ENCODE measurements at regions of chr9 and their contacts with region 1.

Region 1: DNA sequence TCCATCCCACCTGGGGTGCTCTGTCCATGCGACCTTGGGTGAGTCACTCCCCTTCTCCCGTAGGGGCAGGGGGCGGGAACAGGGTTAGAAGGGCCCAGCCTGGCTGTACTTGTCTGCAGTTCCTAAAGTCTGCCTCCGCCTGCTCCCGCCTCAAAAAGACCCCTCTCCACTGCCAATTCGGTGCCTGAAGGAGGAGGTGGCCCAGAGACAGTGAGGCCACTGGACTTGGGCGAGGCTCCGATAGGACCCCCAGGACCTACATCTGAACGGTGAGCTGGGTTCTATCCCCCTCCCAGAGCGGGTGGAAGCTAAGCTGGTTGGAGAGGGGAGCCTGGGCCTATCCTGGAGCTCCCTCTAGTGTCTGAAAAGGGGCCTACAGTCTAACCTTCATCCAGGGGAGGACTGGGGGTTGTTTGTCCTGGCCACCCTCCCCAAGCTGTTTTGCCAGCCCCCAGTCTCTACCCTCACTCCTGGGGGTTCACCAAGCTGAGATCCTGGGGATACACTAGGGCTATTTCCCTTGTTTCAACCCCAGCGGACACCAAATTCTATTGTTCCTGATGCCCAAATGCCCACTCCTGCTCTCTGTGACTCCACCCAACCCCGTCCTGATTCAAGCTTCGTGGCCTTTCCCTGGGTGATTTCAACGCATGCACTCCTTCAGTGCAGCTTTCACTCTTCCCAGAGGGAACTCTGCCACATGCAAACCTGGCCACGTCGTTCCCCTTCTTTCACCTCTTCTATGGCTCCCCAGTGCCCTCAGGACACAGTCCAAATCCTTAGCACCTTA is 6.1 kb upstream of the CRB2 start:
- DNase-seq: peak; percentile 43
- ATAC-seq: peak; percentile 88
- H3K4me3 ChIP-seq: no peak overlapping the region
- H3K27ac ChIP-seq: no peak overlapping the region
- H3K4me1 ChIP-seq: peaks cover 2% of the 10 kb centered on the region; the same call in 1 of the 2 replicates
- H3K27me3 ChIP-seq: peaks cover 42% of the 10 kb centered on the region
- CTCF ChIP-seq: peak; percentile 93
- POLR2A ChIP-seq: no peak
- RAD21 ChIP-seq: peak; percentile 98

Region 2: DNA sequence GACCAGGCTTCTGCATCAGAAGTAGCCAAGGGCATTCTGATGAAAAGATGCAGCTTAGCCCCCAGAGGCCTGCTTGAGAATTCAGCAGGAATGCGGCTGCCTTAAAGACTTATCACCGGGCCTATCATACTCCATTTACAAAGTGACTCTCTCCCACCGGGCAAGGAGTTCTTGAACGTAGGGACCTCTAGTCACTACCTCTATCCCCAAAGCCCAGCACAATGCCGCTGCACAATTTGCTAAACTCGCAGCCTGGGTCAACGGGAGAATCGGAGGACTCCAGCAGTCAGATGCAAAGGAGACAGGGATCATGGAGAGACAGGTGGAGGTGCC is 522.2 kb before region 1 on chr9:
- CTCF ChIA-PET with region 1: no interaction called
- POLR2A ChIA-PET with region 1: no interaction called
- dilution Hi-C with region 1: no loop called
- in situ Hi-C with region 1: loop called (anchors 25 kb)
- intact Hi-C with region 1: no loop called
- DNase-seq: peak; percentile 42
- ATAC-seq: peak; percentile 48
- H3K4me3 ChIP-seq: peak overlapping the region; percentile 69
- H3K27ac ChIP-seq: peak overlapping the region; percentile 87
- H3K4me1 ChIP-seq: peaks cover 8% of the 10 kb centered on the region
- H3K27me3 ChIP-seq: no peaks in the 10 kb centered on the region
- CTCF ChIP-seq: no peak; the same call in 1 of the 2 replicates
- POLR2A ChIP-seq: no peak
- RAD21 ChIP-seq: no peak

Region 3: GRCh38 chr9:122904823-122905710 is 444.8 kb before region 1 on chr9 and contains the start of gene RC3H2:
- CTCF ChIA-PET with region 1: no interaction called
- POLR2A ChIA-PET with region 1: no interaction called
- dilution Hi-C with region 1: no loop called
- in situ Hi-C with region 1: no loop called
- intact Hi-C with region 1: loop called (anchors 2 kb)
- DNase-seq: peak; percentile 100
- ATAC-seq: peak; percentile 95
- H3K4me3 ChIP-seq: peak within 1 kb of the TSS; percentile 99
- H3K27ac ChIP-seq: peak within 1 kb of the TSS; percentile 95
- H3K4me1 ChIP-seq: 0 out of 2 replicates have a peak, but pooled peaks cover 2% of the 10 kb centered on the region
- H3K27me3 ChIP-seq: no peaks in the 10 kb centered on the region
- CTCF ChIP-seq: no peak
- POLR2A ChIP-seq: peak; percentile 83
- RAD21 ChIP-seq: no peak
- total RNA-seq, gene RC3H2: 55.5 and 58.4 TPM in 2 replicates

Region 4: GRCh38 chr9:123081824-123082223 is 268.1 kb before region 1 on chr9:
- CTCF ChIA-PET with region 1: interaction called, 4 read pairs
- POLR2A ChIA-PET with region 1: no interaction called
- dilution Hi-C with region 1: no loop called
- in situ Hi-C with region 1: loop called (anchors 5 kb)
- intact Hi-C with region 1: loop called (anchors 1 kb)
- DNase-seq: peak; percentile 55
- ATAC-seq: peak; percentile 92
- H3K4me3 ChIP-seq: no peak overlapping the region
- H3K27ac ChIP-seq: no peak overlapping the region
- H3K4me1 ChIP-seq: no peaks in the 10 kb centered on the region; the same call in 1 of the 2 replicates
- H3K27me3 ChIP-seq: no peaks in the 10 kb centered on the region
- CTCF ChIP-seq: peak; percentile 73
- POLR2A ChIP-seq: no peak
- RAD21 ChIP-seq: peak; percentile 71

Region 5: GRCh38 chr9:123389070-123389469 is 39.2 kb after region 1 on chr9:
- CTCF ChIA-PET with region 1: interaction called, 4 read pairs
- POLR2A ChIA-PET with region 1: no interaction called
- dilution Hi-C with region 1: no loop called
- in situ Hi-C with region 1: no loop called
- intact Hi-C with region 1: loop called (anchors 1 kb)
- DNase-seq: no peak
- ATAC-seq: no peak
- H3K4me3 ChIP-seq: no peak overlapping the region
- H3K27ac ChIP-seq: no peak overlapping the region
- H3K4me1 ChIP-seq: no peaks in the 10 kb centered on the region
- H3K27me3 ChIP-seq: peaks cover 2% of the 10 kb centered on the region; the same call in 1 of the 2 replicates
- CTCF ChIP-seq: no peak
- POLR2A ChIP-seq: no peak
- RAD21 ChIP-seq: no peak

Region 6: DNA sequence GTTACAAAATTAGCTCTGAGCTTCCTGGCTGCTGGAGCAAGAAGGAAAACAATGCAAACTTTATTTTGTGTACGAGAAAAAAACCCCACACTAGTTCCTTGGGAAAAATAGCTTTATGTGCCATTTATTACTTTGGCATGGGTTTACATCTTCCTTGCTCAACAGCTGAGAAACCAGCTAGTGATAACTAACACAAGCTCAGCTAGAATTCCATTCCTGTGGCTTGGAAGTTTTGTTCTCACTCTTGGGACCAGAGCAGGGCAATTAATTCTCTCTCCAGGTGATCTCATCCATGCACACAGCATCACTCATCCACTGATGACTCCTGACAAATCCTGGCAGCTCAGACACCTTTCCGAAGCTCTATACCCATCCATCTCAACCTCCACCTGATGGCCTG is 110.2 kb after region 1 on chr9:
- CTCF ChIA-PET with region 1: no interaction called
- POLR2A ChIA-PET with region 1: no interaction called
- dilution Hi-C with region 1: no loop called
- in situ Hi-C with region 1: no loop called
- intact Hi-C with region 1: no loop called
- DNase-seq: no peak
- ATAC-seq: no peak
- H3K4me3 ChIP-seq: no peak overlapping the region
- H3K27ac ChIP-seq: no peak overlapping the region
- H3K4me1 ChIP-seq: no peaks in the 10 kb centered on the region
- H3K27me3 ChIP-seq: no peaks in the 10 kb centered on the region
- CTCF ChIP-seq: no peak
- POLR2A ChIP-seq: no peak
- RAD21 ChIP-seq: no peak

Measured in IMR-90 (cell line).